Psoas muscle (tissue), 8 donors: ENCODE measurements at regions of chr9 and their contacts with region 1.

Region 1: GRCh38 chr9:23492126-23493002 is 333.7 kb downstream of the ELAVL2 start:
- DNase-seq: no peak
- ATAC-seq: peak in 3 of 4 donors; percentile 45 to 59 (median 50)
- H3K4me3 ChIP-seq: no peak overlapping the region
- H3K27ac ChIP-seq: no peak overlapping the region
- H3K4me1 ChIP-seq: no peaks in the 10 kb centered on the region
- H3K27me3 ChIP-seq: no peaks in the 10 kb centered on the region
- CTCF ChIP-seq: peak; percentile 50

Region 2: DNA sequence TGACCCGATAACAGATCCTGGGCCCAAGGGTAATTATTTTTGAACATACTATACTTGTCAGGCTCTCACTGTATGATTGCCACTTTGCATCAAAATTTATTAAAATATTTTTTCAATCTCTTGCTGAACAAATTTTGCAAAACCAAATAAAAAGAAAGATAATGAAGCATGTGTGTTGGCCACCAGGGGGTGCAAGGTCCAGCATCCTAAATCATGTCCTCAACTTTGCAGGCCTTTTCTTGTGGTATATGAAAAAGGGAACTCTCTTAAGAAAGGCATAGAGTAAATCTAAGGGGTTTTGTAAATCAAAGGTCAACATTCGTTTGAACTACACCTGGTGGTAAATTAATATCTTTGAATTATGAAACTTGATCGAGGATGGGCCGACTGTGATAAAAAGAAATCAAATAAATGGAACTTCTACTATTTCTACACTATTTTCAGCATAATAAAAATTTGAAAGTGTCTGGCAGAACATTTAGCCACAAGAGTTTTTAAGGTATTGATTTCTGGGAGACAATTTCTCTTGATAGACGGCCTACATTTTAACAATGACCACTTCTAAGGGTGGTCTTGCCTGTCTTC is 369.2 kb before region 1 on chr9:
- intact Hi-C with region 1: loop called in 1 of 2 experiments (anchors 10 kb)
- DNase-seq: no peak
- ATAC-seq: no peak
- H3K4me3 ChIP-seq: no peak overlapping the region
- H3K27ac ChIP-seq: no peak overlapping the region
- H3K4me1 ChIP-seq: no peaks in the 10 kb centered on the region
- H3K27me3 ChIP-seq: no peaks in the 10 kb centered on the region
- CTCF ChIP-seq: peak; percentile 49

Region 3: DNA sequence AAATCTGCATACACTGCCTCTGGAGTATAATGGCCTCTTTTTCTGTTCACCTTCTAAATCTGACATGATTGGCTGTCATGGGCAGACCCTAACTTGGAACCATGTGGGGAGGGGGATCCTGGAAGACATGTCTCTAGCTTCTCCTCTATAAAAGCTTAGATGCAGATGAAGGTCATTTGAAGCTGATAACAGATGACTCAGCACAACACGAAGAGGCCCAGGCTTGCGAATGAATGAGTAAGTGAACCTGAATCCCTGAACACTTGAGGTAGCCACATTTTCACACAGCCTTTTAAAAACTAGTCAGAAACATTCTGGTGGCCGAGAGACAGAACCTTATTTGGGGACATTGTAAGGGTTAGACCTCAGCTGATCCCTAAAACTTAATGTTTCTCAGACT is 51.1 kb after region 1 on chr9:
- intact Hi-C with region 1: no loop called
- DNase-seq: no peak
- ATAC-seq: no peak
- H3K4me3 ChIP-seq: no peak overlapping the region
- H3K27ac ChIP-seq: no peak overlapping the region
- H3K4me1 ChIP-seq: no peaks in the 10 kb centered on the region
- H3K27me3 ChIP-seq: no peaks in the 10 kb centered on the region
- CTCF ChIP-seq: no peak